K562 (cell line): ENCODE measurements at regions of chr2 and their contacts with region 1.

Region 1: DNA sequence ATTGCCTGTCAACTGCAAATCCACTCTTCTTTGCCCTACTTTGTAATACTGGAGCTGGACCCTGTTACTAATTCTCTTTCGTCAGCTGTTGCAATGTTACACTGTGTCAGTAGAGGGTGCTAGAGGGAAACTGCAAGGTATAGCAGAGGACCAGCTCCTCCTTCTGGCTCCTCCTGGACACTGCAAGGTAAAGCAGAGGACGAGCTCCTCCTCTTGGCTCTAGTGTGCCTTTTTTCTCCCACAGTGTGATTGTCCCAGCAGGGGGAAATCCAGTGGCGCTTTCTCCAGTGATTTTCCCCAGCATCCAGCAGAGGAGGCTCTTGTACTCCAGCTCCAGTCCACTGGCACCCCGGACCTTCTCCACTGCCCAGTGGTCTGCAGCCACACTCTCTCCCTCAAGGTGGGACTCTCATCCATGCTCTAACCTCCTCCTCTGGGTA is 95.6 kb downstream of the CAPN13 start:
- DNase-seq: peak; percentile 78 to 91 (median 87)
- ATAC-seq: peak; percentile 90
- H3K4me3 ChIP-seq: no peak overlapping the region
- H3K27ac ChIP-seq: no peak overlapping the region
- H3K4me1 ChIP-seq: peaks cover 0 to 2% of the 10 kb centered on the region in 2 experiments; a peak in 1 of 5 replicates
- H3K27me3 ChIP-seq: peaks cover 4 to 25% of the 10 kb centered on the region in 2 experiments; a peak in 4 of 5 replicates
- CTCF ChIP-seq: peak; percentile 100
- EP300 ChIP-seq: no peak
- POLR2A ChIP-seq: no peak
- RAD21 ChIP-seq: peak; percentile 91 to 98

Region 2: GRCh38 chr2:30089171-30089570 is 622.5 kb before region 1 on chr2:
- CTCF ChIA-PET with region 1: interaction called, 10 read pairs
- POLR2A ChIA-PET with region 1: no interaction called
- in situ Hi-C with region 1: no loop called
- intact Hi-C with region 1: no loop called
- DNase-seq: no peak
- ATAC-seq: no peak
- H3K4me3 ChIP-seq: no peak overlapping the region
- H3K27ac ChIP-seq: no peak overlapping the region
- H3K4me1 ChIP-seq: no peaks in the 10 kb centered on the region
- H3K27me3 ChIP-seq: peaks cover 0 to 16% of the 10 kb centered on the region in 2 experiments; a peak in 3 of 5 replicates
- CTCF ChIP-seq: no peak
- EP300 ChIP-seq: no peak
- POLR2A ChIP-seq: no peak
- RAD21 ChIP-seq: no peak

Region 3: DNA sequence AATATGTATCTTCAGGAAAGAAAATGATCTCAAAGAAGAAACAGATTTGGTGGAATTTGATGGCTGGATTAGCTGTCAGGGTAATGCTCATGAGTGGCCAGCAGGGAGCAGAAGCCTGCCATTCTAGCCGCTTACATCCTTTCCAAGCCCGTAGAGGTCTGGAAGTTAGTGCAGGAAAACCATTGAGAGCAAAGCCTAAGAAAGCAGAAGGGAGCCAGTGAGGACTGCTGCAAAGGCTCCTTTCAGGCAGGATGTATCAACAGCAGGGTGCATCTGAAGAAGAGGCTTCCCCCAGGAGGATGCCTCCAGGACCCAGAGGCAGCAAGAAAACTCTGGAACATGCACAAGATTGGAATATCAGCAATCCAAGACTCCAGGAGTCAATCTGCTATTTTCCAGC is 503.2 kb before region 1 on chr2:
- CTCF ChIA-PET with region 1: interaction called, 35 read pairs
- POLR2A ChIA-PET with region 1: no interaction called
- in situ Hi-C with region 1: loop called (anchors 5 kb)
- intact Hi-C with region 1: loop called (anchors 1 kb)
- DNase-seq: peak; percentile 53 to 75 (median 66)
- ATAC-seq: peak; percentile 91
- H3K4me3 ChIP-seq: no peak overlapping the region
- H3K27ac ChIP-seq: no peak overlapping the region
- H3K4me1 ChIP-seq: peaks cover 2 to 3% of the 10 kb centered on the region in 2 experiments; a peak in 2 of 5 replicates
- H3K27me3 ChIP-seq: no peaks in the 10 kb centered on the region
- CTCF ChIP-seq: peak; percentile 83 to 93 (median 89)
- EP300 ChIP-seq: no peak
- POLR2A ChIP-seq: no peak
- RAD21 ChIP-seq: peak; percentile 95 to 97

Region 4: DNA sequence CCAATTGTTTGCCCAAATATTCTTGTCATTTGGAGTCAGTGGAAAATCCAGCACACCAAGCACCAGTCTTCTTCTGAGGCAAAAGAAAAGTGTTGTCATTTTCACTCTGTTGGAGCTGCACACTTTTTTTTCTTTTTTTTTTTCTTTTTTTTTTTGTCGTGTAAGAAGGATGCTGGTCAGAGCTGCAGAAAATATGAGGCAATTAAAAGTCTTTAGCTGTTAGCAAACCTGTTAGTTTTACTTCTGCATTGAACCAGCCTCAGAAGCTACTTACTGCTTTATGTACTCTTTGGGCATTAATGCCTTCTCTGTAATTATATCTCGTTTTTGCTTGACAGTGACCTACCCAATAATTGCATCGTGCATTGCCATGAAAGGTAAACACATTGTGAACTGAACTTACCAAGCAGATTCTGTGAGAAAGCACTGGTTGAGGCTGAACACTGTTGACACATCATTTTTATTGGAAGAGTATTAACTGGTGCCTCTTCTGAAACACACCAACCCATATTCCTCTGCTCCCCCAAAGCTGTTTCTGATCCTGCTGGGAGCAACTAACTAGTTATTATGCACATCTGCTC is 69.8 kb before region 1 on chr2:
- CTCF ChIA-PET with region 1: no interaction called
- POLR2A ChIA-PET with region 1: no interaction called
- in situ Hi-C with region 1: no loop called
- intact Hi-C with region 1: no loop called
- DNase-seq: no peak
- ATAC-seq: no peak
- H3K4me3 ChIP-seq: no peak overlapping the region
- H3K27ac ChIP-seq: no peak overlapping the region
- H3K4me1 ChIP-seq: no peaks in the 10 kb centered on the region
- H3K27me3 ChIP-seq: no peaks in the 10 kb centered on the region
- CTCF ChIP-seq: no peak
- EP300 ChIP-seq: no peak
- POLR2A ChIP-seq: no peak
- RAD21 ChIP-seq: no peak

Region 5: GRCh38 chr2:30862054-30862651 is 150.5 kb after region 1 on chr2:
- CTCF ChIA-PET with region 1: interaction called, 26 read pairs
- POLR2A ChIA-PET with region 1: no interaction called
- in situ Hi-C with region 1: no loop called
- intact Hi-C with region 1: no loop called
- DNase-seq: peak; percentile 41 to 72 (median 51)
- ATAC-seq: peak; percentile 81
- H3K4me3 ChIP-seq: no peak overlapping the region
- H3K27ac ChIP-seq: no peak overlapping the region
- H3K4me1 ChIP-seq: no peaks in the 10 kb centered on the region
- H3K27me3 ChIP-seq: peaks cover 2 to 5% of the 10 kb centered on the region in 2 experiments; a peak in 3 of 5 replicates
- CTCF ChIP-seq: peak; percentile 63 to 99 (median 99)
- EP300 ChIP-seq: no peak
- POLR2A ChIP-seq: no peak
- RAD21 ChIP-seq: peak; percentile 63 to 67

Region 6: GRCh38 chr2:31170071-31170698 is 458.5 kb after region 1 on chr2:
- CTCF ChIA-PET with region 1: interaction called, 22 read pairs
- POLR2A ChIA-PET with region 1: interaction called, 6 read pairs
- in situ Hi-C with region 1: loop called (anchors 10 kb)
- intact Hi-C with region 1: loop called (anchors 1 kb)
- DNase-seq: peak; percentile 69 to 77 (median 74)
- ATAC-seq: peak; percentile 98
- H3K4me3 ChIP-seq: no peak overlapping the region
- H3K27ac ChIP-seq: no peak overlapping the region
- H3K4me1 ChIP-seq: no peaks in the 10 kb centered on the region
- H3K27me3 ChIP-seq: peaks cover 0 to 3% of the 10 kb centered on the region in 2 experiments; a peak in 1 of 5 replicates
- CTCF ChIP-seq: peak; percentile 88 to 90 (median 88)
- EP300 ChIP-seq: no peak
- POLR2A ChIP-seq: no peak
- RAD21 ChIP-seq: peak; percentile 75 to 86

Region 7: GRCh38 chr2:31523871-31524492 is 812.3 kb after region 1 on chr2:
- CTCF ChIA-PET with region 1: no interaction called
- POLR2A ChIA-PET with region 1: no interaction called
- in situ Hi-C with region 1: no loop called
- intact Hi-C with region 1: loop called (anchors 5 kb)
- DNase-seq: peak; percentile 37 to 59 (median 42)
- ATAC-seq: peak; percentile 90
- H3K4me3 ChIP-seq: no peak overlapping the region
- H3K27ac ChIP-seq: no peak overlapping the region
- H3K4me1 ChIP-seq: no peaks in the 10 kb centered on the region
- H3K27me3 ChIP-seq: 0 out of 5 replicates have a peak, but pooled peaks cover 0 to 4% of the 10 kb centered on the region in 2 experiments
- CTCF ChIP-seq: peak; percentile 56 to 70 (median 66); a peak in 5 of 6 replicates
- EP300 ChIP-seq: no peak
- POLR2A ChIP-seq: no peak
- RAD21 ChIP-seq: peak in 1 of 2 experiments; percentile 59; a peak in 3 of 4 replicates